Transverse colon (tissue), 4 donors: ENCODE measurements at regions of chr7 and their contacts with region 1.

Region 1: DNA sequence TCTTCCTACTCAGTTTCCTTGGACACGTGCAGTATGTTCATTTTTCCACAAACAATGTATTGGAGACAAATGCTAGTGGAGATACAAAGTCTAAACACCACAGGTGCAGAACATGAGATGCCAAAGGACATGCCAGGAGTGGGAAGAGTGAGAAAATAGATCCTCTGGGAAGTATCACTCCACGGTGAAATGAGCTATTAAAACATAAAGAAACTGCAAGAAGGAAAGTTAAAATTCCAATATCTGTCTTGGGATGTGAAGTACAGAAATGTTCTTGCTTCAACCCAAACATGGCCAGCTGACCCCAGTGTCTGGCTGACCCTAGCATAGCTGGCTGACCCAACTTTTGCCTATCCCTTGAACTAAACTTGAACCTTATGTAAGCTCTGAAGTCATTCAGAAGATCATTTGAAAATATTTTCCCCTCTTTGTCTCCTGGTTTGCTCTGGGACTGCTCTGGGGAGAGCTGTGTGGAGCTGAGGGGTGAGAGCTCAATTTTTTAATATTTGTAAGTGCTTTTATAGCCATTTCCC is 59.5 kb downstream of the FZD1 start:
- DNase-seq: no peak
- H3K4me3 ChIP-seq: no peak overlapping the region
- H3K27ac ChIP-seq: no peak overlapping the region
- H3K4me1 ChIP-seq: peaks cover 0 to 3% (median 0%) of the 10 kb centered on the region in 4 donors
- H3K27me3 ChIP-seq: no peaks in the 10 kb centered on the region
- CTCF ChIP-seq: no peak
- EP300 ChIP-seq: no peak
- POLR2A ChIP-seq: no peak

Region 2: GRCh38 chr7:91140984-91141383 is 182.7 kb before region 1 on chr7:
- in situ Hi-C with region 1: no loop called
- intact Hi-C with region 1: no loop called
- DNase-seq: no peak
- H3K4me3 ChIP-seq: no peak overlapping the region
- H3K27ac ChIP-seq: no peak overlapping the region
- H3K4me1 ChIP-seq: no peaks in the 10 kb centered on the region
- H3K27me3 ChIP-seq: no peaks in the 10 kb centered on the region
- CTCF ChIP-seq: no peak
- EP300 ChIP-seq: no peak
- POLR2A ChIP-seq: no peak

Region 3: GRCh38 chr7:91491868-91492267 is 168.2 kb after region 1 on chr7:
- in situ Hi-C with region 1: no loop called
- intact Hi-C with region 1: loop called (anchors 5 kb)
- DNase-seq: no peak
- H3K4me3 ChIP-seq: no peak overlapping the region
- H3K27ac ChIP-seq: no peak overlapping the region
- H3K4me1 ChIP-seq: no peaks in the 10 kb centered on the region
- H3K27me3 ChIP-seq: no peaks in the 10 kb centered on the region
- CTCF ChIP-seq: no peak
- EP300 ChIP-seq: no peak
- POLR2A ChIP-seq: no peak